ENCODE measurements at regions of chr2 and their contacts with region 1.

Region 1: DNA sequence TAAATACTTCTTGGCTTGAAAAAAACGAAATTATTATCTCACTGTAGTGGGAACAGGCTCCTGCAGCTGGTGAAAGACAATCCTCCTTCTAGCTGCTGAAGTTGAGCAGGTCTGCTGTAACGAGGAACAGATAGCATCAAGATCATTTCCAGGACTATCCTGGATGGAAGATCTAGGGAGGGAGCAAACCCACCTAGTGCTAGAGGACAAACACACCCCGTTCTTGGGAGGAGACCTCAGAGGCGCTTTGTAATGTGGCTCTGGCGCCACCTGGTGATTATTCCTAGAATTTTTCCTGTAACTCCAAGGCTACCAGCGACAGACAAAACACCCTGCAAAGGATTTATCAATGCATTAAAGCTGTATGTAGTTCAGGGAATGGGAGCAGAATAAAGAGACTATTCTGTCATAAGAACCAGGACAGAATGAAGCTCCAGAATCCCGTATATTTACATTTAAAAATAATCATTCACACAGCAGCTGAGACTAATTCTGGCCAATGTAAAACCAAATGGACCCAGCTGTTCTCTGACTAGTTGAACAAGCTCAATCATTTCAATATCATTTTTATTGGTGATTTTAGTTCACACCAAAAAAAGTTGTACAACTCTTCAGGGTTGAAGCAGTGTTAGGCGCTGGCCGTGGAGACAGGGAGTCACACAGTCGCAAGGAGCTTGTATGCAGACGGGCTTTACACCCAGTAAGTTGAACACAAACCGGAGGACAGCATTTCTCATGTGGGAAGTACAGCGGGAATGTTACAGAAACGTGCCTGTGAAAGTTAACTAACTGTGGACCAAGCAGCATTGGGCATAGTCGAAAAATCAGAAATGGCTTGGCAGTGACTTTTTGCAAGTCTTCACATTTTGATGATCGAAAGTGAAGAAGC is 290.3 kb downstream of the TRIB2 start:
- DNase-seq: peak; percentile 17 to 42 (median 39)
- H3K4me3 ChIP-seq: no peak overlapping the region
- H3K4me3 Mint-ChIP-seq: peak overlapping the region in 1 of 2 donors; percentile 10
- H3K27ac ChIP-seq: no peak overlapping the region
- H3K27ac Mint-ChIP-seq: no peak overlapping the region
- H3K4me1 ChIP-seq: no peaks in the 10 kb centered on the region
- H3K4me1 Mint-ChIP-seq: peaks cover 4% of the 10 kb centered on the region
- H3K27me3 ChIP-seq: peaks cover 5 to 13% of the 10 kb centered on the region in 2 donors
- H3K27me3 Mint-ChIP-seq: peaks cover 2 to 18% (median 9%) of the 10 kb centered on the region in 3 donors
- CTCF ChIP-seq: peak; percentile 96

Region 2: DNA sequence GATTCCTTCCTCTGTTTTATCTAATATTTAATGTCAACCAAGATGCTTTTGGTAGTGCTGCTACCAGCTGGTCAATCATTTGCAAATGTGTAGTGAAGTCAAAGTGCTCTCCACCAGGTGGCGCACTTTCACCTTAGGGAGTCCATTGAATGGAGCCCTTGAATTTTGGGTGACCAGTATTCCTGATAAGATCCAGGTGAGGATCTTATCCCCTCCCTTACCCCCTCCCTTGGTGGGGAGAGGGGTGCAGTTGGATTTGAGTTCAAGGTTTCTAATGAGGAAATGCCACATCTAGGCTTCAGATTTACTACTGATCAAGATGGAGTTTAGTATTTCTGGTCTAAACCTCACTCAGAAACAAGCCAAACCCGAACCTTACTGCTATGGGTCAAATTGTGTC is 1529.1 kb before region 1 on chr2:
- intact Hi-C with region 1: loop called in 1 of 2 experiments (anchors 5 kb)
- DNase-seq: peak; percentile 61 to 84 (median 75)
- H3K4me3 ChIP-seq: no peak overlapping the region
- H3K4me3 Mint-ChIP-seq: no peak overlapping the region
- H3K27ac ChIP-seq: no peak overlapping the region
- H3K27ac Mint-ChIP-seq: no peak overlapping the region
- H3K4me1 ChIP-seq: peaks cover 0 to under 1% of the 10 kb centered on the region in 2 donors
- H3K4me1 Mint-ChIP-seq: peaks cover under 1% of the 10 kb centered on the region
- H3K27me3 ChIP-seq: peaks cover 37 to 41% of the 10 kb centered on the region in 2 donors
- H3K27me3 Mint-ChIP-seq: peaks cover 32 to 45% (median 41%) of the 10 kb centered on the region in 3 donors
- CTCF ChIP-seq: peak; percentile 93

Region 3: DNA sequence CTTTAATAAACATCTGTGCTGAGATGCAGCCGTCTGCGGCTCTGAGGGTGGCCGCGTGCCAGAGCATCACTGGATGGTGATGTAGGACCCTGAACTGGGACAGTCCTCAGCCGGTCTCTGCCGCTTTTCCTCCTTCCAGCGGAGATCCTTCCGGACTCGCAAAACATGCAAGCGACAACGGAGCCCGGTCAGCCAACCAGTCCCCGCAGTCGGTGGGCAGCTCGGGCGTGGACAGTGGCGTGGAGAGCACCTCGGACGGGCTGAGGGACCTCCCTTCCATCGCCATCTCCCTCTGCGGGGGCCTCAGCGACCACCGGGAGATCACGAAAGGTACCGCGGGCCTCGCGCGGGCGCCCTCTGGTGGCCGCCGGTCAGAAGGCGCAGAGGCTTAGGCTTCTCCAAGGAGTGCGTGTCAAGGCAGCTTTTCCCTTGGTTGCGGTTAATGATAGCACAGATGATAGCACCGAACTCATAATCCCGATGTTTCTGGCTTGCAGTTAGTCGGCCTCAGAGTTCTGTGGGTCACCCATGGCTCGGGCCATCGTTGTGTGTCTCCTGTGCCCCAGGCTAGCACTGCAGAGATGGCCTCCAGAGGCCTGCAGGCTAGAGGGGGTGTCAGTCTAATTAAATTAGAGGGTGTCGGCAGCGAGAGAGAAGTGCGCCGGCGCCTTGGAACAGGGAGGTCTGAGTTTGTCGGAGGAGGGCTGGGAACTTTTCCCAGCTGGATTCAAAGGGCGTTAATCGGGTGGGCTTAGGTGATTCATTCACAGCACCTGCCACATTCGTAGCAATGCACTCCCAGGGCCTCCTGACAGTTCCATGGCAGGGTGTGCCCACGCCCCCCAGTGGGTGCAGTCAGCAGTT is 1222.1 kb before region 1 on chr2:
- intact Hi-C with region 1: loop called (anchors 5 to 10 kb)
- DNase-seq: peak in 2 of 3 donors; percentile 7 to 17
- H3K4me3 ChIP-seq: no peak overlapping the region
- H3K4me3 Mint-ChIP-seq: no peak overlapping the region
- H3K27ac ChIP-seq: no peak overlapping the region
- H3K27ac Mint-ChIP-seq: no peak overlapping the region
- H3K4me1 ChIP-seq: no peaks in the 10 kb centered on the region
- H3K4me1 Mint-ChIP-seq: no peaks in the 10 kb centered on the region
- H3K27me3 ChIP-seq: no peaks in the 10 kb centered on the region
- H3K27me3 Mint-ChIP-seq: peaks cover 0 to 3% (median 1%) of the 10 kb centered on the region in 3 donors
- CTCF ChIP-seq: peak; percentile 98

Region 4: DNA sequence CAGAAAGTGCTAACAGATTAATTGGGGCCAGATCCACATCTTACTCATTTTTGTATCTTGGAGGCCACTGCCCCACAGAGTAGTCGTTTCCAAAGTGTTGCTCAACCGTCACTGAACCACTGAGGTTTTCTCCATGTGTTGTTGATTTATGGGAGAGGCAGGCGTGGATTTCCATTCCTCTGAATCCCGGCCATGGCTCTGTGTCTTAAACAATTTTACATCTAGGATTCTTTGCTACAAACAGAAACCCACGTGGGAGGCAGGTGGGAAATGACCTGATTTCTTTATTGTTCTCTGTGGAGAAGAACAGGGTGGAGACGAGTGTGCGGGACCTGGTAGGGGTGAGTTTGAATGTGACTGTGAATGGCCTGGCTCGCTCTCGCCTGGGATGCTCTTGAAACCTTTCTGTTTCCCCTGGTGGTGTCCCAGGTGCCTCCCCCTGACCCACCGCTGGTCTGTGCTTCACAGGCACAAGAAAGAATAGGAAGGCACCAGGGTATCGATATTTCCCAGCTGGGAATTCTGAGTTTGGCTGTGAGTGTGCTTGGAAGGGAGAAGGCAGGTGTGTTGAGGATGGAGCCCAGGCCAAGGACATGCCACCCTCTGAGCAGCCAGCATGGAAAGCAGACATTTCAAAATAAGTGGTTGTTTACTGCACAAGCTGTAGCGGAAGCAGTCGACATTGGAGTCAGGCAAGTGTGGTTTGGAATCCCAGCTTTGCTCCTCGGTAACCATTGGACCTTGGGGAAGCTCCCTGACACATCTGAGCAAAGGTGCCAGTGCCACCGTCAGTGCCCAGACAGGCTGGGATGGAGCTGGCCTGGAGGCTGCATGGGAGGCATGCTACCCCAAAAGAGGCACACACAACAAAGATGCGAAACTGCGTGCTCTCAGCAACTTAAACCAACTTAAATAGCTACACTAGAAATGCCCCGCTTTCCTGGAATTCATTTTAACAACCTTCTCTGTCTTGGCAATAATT is 1210.6 kb before region 1 on chr2:
- intact Hi-C with region 1: loop called in 1 of 2 experiments (anchors 10 kb)
- DNase-seq: no peak
- H3K4me3 ChIP-seq: no peak overlapping the region
- H3K4me3 Mint-ChIP-seq: no peak overlapping the region
- H3K27ac ChIP-seq: no peak overlapping the region
- H3K27ac Mint-ChIP-seq: peak overlapping the region in 1 of 7 donors; percentile 55
- H3K4me1 ChIP-seq: no peaks in the 10 kb centered on the region
- H3K4me1 Mint-ChIP-seq: no peaks in the 10 kb centered on the region
- H3K27me3 ChIP-seq: no peaks in the 10 kb centered on the region
- H3K27me3 Mint-ChIP-seq: peaks cover 0 to 4% (median 2%) of the 10 kb centered on the region in 3 donors
- CTCF ChIP-seq: no peak

Region 5: DNA sequence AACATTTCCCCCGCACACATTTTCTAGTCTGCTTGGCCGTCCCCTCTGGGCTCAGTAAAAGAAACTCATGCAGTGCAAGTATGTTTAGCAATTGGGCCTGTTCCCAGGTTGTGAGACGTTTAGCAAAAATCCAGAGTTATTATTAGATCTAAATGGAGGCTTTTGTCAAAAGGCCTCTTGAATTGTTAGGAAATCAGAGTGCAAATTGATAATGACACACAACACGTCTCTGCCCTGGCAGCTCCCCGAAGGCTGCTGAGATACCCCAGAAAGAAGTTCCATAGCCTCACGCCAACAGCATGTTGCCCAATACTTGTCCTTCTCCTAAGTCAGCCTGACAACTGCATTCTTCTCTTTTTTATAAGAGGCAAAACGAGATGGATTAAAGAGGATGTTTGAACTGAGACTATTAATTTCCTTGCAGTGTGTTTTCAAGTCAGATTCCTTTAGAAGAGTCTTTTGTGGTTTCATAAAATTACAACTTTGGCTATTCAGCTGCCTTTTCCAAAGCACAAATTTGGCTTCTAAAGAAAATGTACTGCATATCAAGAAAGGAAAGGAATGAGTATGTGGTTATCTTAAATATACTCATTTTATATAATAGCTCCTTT is 88.1 kb before region 1 on chr2:
- intact Hi-C with region 1: no loop called
- DNase-seq: no peak
- H3K4me3 ChIP-seq: no peak overlapping the region
- H3K4me3 Mint-ChIP-seq: no peak overlapping the region
- H3K27ac ChIP-seq: no peak overlapping the region
- H3K27ac Mint-ChIP-seq: no peak overlapping the region
- H3K4me1 ChIP-seq: no peaks in the 10 kb centered on the region
- H3K4me1 Mint-ChIP-seq: no peaks in the 10 kb centered on the region
- H3K27me3 ChIP-seq: peaks cover 0 to 2% of the 10 kb centered on the region in 2 donors
- H3K27me3 Mint-ChIP-seq: peaks cover 2 to 4% (median 4%) of the 10 kb centered on the region in 3 donors
- CTCF ChIP-seq: no peak